CD8-positive, alpha-beta T cell (primary cell): ENCODE measurements at regions of chr14 and their contacts with region 1.

Region 1: DNA sequence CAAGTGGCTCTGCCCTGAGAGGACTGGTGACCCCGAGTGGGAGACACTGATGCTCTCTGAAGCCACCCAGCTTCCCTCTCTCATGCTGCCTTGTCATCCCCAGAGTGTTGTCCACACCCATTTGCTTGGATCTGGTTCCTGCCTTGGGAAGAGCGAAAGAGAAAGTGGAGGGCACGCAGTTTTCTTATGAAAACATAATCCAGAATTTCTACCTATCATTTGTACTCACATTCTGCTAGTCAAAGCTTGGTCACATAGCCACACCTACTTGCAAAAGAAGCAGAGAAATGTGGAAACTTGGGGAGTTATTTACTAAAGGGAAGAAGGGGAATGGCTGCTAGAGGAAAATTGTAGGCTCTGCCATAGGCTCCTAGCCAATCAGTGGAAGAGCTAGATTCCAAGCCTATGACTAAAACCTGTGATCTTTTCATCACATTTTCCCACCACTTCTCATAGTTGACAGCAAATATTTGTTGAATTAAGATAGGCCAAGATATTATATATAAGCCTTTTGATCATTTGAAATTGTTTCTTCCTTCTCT is 326.3 kb downstream of the ZFP36L1 start:
- DNase-seq: no peak
- ATAC-seq: no peak
- H3K4me3 ChIP-seq: no peak overlapping the region
- H3K4me3 Mint-ChIP-seq: no peak overlapping the region
- H3K27ac ChIP-seq: no peak overlapping the region
- H3K27ac Mint-ChIP-seq: no peak overlapping the region
- H3K4me1 ChIP-seq: peaks cover 11% of the 10 kb centered on the region
- H3K4me1 Mint-ChIP-seq: peaks cover 19% of the 10 kb centered on the region
- H3K27me3 ChIP-seq: no peaks in the 10 kb centered on the region
- H3K27me3 Mint-ChIP-seq: no peaks in the 10 kb centered on the region
- CTCF ChIP-seq: no peak

Region 2: GRCh38 chr14:68377459-68377858 is 89.1 kb before region 1 on chr14:
- CTCF ChIA-PET with region 1: no interaction called
- POLR2A ChIA-PET with region 1: no interaction called
- intact Hi-C with region 1: no loop called
- DNase-seq: peak in 2 of 9 experiments; percentile 6 to 45
- ATAC-seq: no peak
- H3K4me3 ChIP-seq: no peak overlapping the region
- H3K4me3 Mint-ChIP-seq: no peak overlapping the region
- H3K27ac ChIP-seq: peak overlapping the region in 1 of 2 experiments; percentile 32
- H3K27ac Mint-ChIP-seq: peak overlapping the region; percentile 74
- H3K4me1 ChIP-seq: peaks cover 61% of the 10 kb centered on the region
- H3K4me1 Mint-ChIP-seq: peaks cover 68% of the 10 kb centered on the region
- H3K27me3 ChIP-seq: no peaks in the 10 kb centered on the region
- H3K27me3 Mint-ChIP-seq: no peaks in the 10 kb centered on the region
- CTCF ChIP-seq: no peak

Region 3: DNA sequence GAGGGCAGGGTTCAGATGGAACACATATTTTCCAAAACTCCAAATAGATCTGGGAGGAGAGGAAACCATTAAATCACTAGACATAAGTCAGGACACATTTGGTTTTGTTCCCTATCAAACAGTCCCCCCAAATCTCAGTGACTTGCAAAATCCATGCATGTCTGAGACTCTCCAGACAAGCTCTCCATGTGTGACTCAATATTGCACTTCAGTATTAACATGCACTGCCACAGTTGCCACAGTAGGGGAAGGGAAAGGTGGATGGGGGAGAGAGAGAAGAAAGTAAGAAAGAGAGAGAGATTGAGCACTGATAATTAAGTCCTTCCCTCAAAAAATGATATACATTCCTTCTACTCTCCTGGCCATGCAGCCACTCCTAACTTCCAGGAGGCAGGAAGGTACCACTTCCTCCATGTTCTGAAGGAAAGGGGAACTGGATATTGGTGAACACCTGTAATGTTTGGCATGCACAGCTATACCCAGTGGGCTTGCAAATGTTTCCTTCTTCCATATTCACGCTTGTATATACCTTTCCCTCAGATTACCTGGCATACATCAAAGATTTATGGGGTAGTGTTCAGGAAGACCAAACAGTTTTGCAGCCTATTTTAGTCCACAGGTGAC is 16.3 kb after region 1 on chr14:
- CTCF ChIA-PET with region 1: interaction called, 3 read pairs
- POLR2A ChIA-PET with region 1: interaction called, 6 read pairs
- intact Hi-C with region 1: loop called in 1 of 2 experiments (anchors 1 kb)
- DNase-seq: no peak
- ATAC-seq: no peak
- H3K4me3 ChIP-seq: no peak overlapping the region
- H3K4me3 Mint-ChIP-seq: no peak overlapping the region
- H3K27ac ChIP-seq: no peak overlapping the region
- H3K27ac Mint-ChIP-seq: peak overlapping the region; percentile 94
- H3K4me1 ChIP-seq: peaks cover 43% of the 10 kb centered on the region
- H3K4me1 Mint-ChIP-seq: peaks cover 76% of the 10 kb centered on the region
- H3K27me3 ChIP-seq: no peaks in the 10 kb centered on the region
- H3K27me3 Mint-ChIP-seq: no peaks in the 10 kb centered on the region
- CTCF ChIP-seq: no peak

Region 4: DNA sequence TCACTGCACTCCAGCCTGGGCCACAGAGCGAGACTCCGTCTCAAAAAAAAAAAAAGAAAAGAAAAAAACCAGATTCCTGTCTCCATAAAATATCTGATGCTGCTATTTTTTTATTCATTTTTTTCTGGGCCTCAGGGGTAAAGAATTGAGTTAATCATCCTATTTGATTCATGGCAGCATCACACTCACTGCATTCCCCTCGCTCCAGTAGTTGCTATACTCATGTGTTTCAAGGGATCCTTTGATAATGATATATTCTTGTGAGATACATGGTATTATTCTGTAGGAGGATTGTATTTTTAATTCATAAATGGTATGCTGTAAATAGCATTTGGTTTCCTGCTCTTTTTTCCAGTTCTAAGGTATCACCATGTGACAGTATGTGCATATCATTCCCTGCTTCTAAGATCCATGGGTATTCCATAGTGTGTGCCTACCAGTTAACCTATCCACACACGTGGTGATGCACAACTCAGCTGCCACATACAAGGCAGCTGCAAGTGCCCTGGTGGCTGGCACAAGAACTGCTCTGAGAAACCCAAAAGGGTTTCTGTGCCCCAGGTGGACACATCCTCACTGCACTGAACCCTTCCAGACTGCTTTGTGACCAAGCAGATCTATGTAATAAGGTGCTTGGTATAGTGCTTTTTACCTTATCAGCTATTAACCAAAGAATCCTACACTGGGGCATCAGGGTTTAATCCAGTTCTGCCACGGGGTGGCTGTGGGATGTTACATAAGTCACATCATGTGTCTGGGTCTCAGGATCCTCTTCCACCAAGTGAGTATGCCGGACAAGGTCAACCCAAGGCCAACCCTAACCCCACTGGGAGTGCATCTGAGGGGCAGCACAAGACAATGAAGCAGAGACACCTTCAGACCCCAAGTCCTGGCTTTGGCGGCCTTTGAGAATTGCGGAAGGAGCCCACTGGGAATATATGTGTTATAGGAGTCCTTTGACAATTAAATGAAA is 251.7 kb after region 1 on chr14:
- CTCF ChIA-PET with region 1: no interaction called
- POLR2A ChIA-PET with region 1: no interaction called
- intact Hi-C with region 1: loop called in 1 of 2 experiments (anchors 1 kb)
- DNase-seq: peak in 1 of 9 experiments; percentile 18
- ATAC-seq: peak; percentile 36
- H3K4me3 ChIP-seq: no peak overlapping the region
- H3K4me3 Mint-ChIP-seq: no peak overlapping the region
- H3K27ac ChIP-seq: no peak overlapping the region
- H3K27ac Mint-ChIP-seq: no peak overlapping the region
- H3K4me1 ChIP-seq: peaks cover 8% of the 10 kb centered on the region
- H3K4me1 Mint-ChIP-seq: peaks cover 33% of the 10 kb centered on the region
- H3K27me3 ChIP-seq: no peaks in the 10 kb centered on the region
- H3K27me3 Mint-ChIP-seq: no peaks in the 10 kb centered on the region
- CTCF ChIP-seq: no peak